IMR-90 (cell line): ENCODE measurements at regions of chr17 and their contacts with region 1.

Region 1: DNA sequence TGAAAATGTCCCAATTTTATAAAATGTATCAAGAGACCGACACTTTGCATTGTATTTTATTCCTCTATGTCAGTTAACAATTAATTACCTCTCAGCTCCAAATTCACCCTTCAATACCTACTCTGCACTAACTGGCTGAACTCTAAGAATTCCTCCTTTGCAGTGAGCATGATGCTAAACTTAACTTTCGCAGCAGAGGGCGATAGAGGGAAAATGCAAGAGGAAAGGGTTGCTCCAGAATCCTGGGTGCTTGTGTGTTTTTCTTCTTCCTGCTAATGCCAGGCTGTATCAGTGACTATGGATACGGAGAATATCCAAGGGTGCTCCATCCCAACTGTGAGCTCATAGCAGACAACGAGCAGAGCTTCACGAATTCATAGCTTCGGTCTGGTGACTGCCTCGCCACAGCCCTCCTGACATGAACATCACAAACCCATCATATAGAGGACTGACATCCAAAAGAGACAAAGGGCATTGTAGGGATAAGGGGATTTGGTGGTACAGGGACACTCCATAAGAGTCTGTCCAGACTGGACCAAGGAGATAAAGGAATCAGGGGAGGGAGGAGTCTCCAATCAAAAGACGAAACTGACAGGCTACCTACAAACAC is 172.9 kb downstream of the STX8 start:
- DNase-seq: peak; percentile 23
- ATAC-seq: no peak
- H3K4me3 ChIP-seq: no peak overlapping the region
- H3K27ac ChIP-seq: no peak overlapping the region
- H3K4me1 ChIP-seq: no peaks in the 10 kb centered on the region; the same call in 1 of the 2 replicates
- H3K27me3 ChIP-seq: no peaks in the 10 kb centered on the region
- CTCF ChIP-seq: peak; percentile 37; the same call in 1 of the 2 replicates
- POLR2A ChIP-seq: no peak
- RAD21 ChIP-seq: no peak; the same call in 1 of the 2 replicates

Region 2: GRCh38 chr17:8886087-8886684 is 516.5 kb before region 1 on chr17:
- CTCF ChIA-PET with region 1: no interaction called
- POLR2A ChIA-PET with region 1: no interaction called
- dilution Hi-C with region 1: no loop called
- in situ Hi-C with region 1: no loop called
- intact Hi-C with region 1: no loop called
- DNase-seq: no peak
- ATAC-seq: no peak
- H3K4me3 ChIP-seq: no peak overlapping the region
- H3K27ac ChIP-seq: no peak overlapping the region
- H3K4me1 ChIP-seq: no peaks in the 10 kb centered on the region
- H3K27me3 ChIP-seq: no peaks in the 10 kb centered on the region
- CTCF ChIP-seq: no peak
- POLR2A ChIP-seq: no peak
- RAD21 ChIP-seq: no peak

Region 3: DNA sequence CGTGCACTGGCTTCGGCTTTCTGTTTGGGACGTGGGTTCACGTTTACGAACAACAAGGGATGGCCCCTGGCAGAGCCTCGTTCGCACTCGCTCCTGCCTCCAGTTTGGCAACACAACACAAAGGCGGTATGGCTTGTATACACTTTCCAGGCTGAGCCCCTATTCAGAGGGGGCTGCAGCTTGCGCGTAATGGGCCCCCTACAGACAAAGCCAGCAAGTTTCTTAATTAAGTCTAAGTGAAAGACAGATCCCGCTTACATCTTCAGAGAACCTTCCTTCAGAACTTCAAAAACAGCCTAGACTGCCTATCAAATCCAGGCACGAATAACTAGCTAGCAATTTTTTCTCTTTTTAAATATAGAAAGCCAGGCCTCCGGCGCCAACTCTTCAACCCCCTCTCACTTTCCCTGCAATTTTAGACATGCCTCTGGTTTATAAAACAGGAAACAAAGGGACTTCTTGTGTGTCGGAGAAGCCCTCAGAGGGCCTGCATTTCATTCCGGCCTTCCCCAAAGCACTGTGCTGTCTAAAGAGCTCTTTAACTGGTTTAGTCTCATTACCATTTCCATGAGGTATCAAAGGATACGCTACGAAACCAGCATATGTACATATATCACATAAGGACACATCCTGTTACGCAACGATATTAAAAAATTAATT is 72.0 kb before region 1 on chr17:
- CTCF ChIA-PET with region 1: no interaction called
- POLR2A ChIA-PET with region 1: no interaction called
- dilution Hi-C with region 1: no loop called
- in situ Hi-C with region 1: loop called (anchors 10 kb)
- intact Hi-C with region 1: no loop called
- DNase-seq: no peak
- ATAC-seq: no peak
- H3K4me3 ChIP-seq: no peak overlapping the region
- H3K27ac ChIP-seq: no peak overlapping the region
- H3K4me1 ChIP-seq: no peaks in the 10 kb centered on the region
- H3K27me3 ChIP-seq: no peaks in the 10 kb centered on the region
- CTCF ChIP-seq: no peak
- POLR2A ChIP-seq: no peak
- RAD21 ChIP-seq: no peak

Region 4: GRCh38 chr17:9346296-9346926 is 56.3 kb before region 1 on chr17:
- CTCF ChIA-PET with region 1: no interaction called
- POLR2A ChIA-PET with region 1: no interaction called
- dilution Hi-C with region 1: no loop called
- in situ Hi-C with region 1: no loop called
- intact Hi-C with region 1: loop called (anchors 10 kb)
- DNase-seq: peak; percentile 33
- ATAC-seq: no peak
- H3K4me3 ChIP-seq: no peak overlapping the region
- H3K27ac ChIP-seq: no peak overlapping the region
- H3K4me1 ChIP-seq: peaks cover 8% of the 10 kb centered on the region
- H3K27me3 ChIP-seq: no peaks in the 10 kb centered on the region
- CTCF ChIP-seq: no peak
- POLR2A ChIP-seq: no peak
- RAD21 ChIP-seq: no peak

Region 5: DNA sequence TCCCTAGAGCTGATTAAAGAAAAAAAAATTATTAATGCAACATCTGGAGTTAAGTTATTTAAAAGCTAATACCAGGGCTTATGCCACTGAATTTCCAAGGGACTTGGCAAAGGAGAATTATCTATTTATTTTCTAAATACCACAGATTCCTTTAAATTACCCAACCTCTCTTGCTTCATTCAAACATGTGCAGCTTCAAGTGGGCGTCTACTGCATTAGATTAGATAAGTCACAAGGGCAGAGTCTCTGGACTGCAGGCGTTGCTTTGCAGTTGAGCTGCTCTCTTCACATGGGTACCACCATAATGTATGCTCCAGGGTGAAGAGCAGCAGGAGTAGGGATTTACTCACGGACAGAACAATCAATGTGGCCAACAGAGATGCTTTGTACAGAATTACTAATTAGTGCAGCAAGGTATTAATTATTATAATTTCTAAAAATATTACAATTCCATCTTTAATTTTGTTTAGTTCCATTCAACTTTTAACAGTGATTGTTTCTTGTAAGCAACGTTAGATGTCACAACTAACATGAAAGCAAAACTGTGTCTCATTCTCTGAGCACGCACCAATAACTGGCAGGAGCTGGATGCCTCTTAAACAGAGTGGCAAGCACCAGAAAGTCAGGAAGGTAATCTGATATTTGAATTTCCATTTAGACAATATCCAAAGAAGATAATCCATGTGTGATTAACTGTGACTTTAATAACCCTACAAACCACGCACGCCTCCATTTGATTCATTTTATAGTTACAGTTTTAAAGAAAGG is 41.3 kb before region 1 on chr17:
- CTCF ChIA-PET with region 1: no interaction called
- POLR2A ChIA-PET with region 1: no interaction called
- dilution Hi-C with region 1: no loop called
- in situ Hi-C with region 1: no loop called
- intact Hi-C with region 1: loop called (anchors 2 kb)
- DNase-seq: peak; percentile 89
- ATAC-seq: peak; percentile 88
- H3K4me3 ChIP-seq: no peak overlapping the region
- H3K27ac ChIP-seq: no peak overlapping the region
- H3K4me1 ChIP-seq: peaks cover 9% of the 10 kb centered on the region; the same call in 1 of the 2 replicates
- H3K27me3 ChIP-seq: no peaks in the 10 kb centered on the region
- CTCF ChIP-seq: no peak
- POLR2A ChIP-seq: no peak
- RAD21 ChIP-seq: no peak

Region 6: GRCh38 chr17:9549215-9549614 is 146.5 kb after region 1 on chr17:
- CTCF ChIA-PET with region 1: no interaction called
- POLR2A ChIA-PET with region 1: no interaction called
- dilution Hi-C with region 1: no loop called
- in situ Hi-C with region 1: no loop called
- intact Hi-C with region 1: no loop called
- DNase-seq: no peak
- ATAC-seq: no peak; the same call in 1 of the 2 replicates
- H3K4me3 ChIP-seq: no peak overlapping the region
- H3K27ac ChIP-seq: no peak overlapping the region
- H3K4me1 ChIP-seq: no peaks in the 10 kb centered on the region
- H3K27me3 ChIP-seq: no peaks in the 10 kb centered on the region
- CTCF ChIP-seq: no peak
- POLR2A ChIP-seq: no peak
- RAD21 ChIP-seq: no peak

Region 7: DNA sequence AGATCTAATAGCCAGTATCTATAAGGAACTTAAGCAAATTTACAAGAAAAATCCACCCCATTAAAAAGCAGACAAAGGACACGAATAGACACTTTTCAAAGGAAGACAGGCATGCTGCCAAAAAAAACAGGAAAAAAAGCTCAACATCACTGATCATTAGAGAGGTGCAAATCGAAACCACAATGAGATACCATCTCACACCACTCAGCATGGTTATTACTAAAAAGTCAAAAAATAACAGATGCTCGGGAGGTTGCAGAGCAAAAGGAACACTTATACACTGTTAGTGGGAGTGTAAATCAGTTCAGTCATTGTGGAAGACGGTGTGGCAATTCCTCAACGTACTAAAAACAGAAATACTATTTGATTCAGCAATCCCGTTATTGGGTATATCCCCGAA is 163.4 kb after region 1 on chr17:
- CTCF ChIA-PET with region 1: no interaction called
- POLR2A ChIA-PET with region 1: interaction called, 12 read pairs
- dilution Hi-C with region 1: no loop called
- in situ Hi-C with region 1: no loop called
- intact Hi-C with region 1: no loop called
- DNase-seq: no peak
- ATAC-seq: no peak
- H3K4me3 ChIP-seq: no peak overlapping the region
- H3K27ac ChIP-seq: no peak overlapping the region
- H3K4me1 ChIP-seq: no peaks in the 10 kb centered on the region
- H3K27me3 ChIP-seq: no peaks in the 10 kb centered on the region
- CTCF ChIP-seq: no peak
- POLR2A ChIP-seq: no peak
- RAD21 ChIP-seq: no peak